Natural killer cell (primary cell): ENCODE measurements at regions of chr12 and their contacts with region 1.

Region 1: DNA sequence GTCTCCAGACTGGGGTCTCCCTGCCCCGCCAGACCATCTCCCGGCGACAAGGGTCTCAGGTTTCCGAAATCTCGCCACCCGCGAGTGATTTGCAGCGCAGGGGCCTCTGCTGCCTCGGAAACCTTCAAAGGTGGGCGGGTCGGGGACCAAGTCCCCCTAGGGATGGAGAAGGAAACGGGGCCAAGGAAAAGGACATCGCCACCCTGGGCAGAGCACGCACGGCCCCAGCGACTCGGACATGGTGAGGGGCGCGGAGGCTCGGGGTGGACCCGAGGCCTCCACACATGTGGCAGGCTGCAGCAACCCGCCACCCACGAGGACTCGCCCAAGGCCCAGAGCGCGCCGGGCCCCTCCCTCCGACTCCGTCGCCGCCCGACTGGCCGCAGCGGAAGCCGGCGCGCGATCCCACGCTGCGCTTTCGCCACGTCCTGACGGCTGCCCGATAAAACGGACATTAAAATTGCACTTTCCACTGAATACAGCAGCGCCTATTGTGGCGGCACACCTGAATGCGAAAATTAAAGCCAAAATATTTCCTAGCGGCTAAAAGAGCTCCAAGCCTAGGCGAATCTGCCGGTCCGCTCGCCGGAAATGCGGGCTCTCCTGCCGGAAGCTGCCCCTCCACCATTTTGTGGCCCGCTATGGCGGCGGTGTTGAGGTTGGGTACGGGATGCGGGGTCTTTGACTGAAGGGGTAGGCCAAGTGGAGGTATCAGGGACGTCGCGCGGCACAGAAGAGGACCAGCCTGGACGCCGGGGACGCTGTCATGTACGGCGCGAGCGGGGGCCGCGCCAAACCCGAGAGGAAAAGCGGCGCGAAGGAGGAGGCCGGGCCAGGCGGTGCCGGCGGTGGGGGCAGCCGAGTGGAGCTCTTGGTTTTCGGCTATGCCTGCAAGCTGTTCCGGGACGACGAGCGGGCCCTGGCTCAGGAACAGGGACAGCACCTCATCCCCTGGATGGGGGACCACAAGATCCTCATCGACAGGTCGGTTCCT is at the start of gene SFSWAP:
- DNase-seq: peak; percentile 78 to 82
- ATAC-seq: peak; percentile 90 to 92 (median 91)
- H3K4me3 ChIP-seq: peak within 1 kb of the TSS; percentile 95
- H3K4me3 Mint-ChIP-seq: peak within 1 kb of the TSS; percentile 97
- H3K27ac ChIP-seq: peak within 1 kb of the TSS; percentile 95
- H3K27ac Mint-ChIP-seq: peak within 1 kb of the TSS; percentile 93 to 97
- H3K4me1 ChIP-seq: peaks cover 21% of the 10 kb centered on the region
- H3K4me1 Mint-ChIP-seq: peaks cover 14 to 32% of the 10 kb centered on the region in 2 donors
- H3K27me3 ChIP-seq: no peaks in the 10 kb centered on the region
- H3K27me3 Mint-ChIP-seq: peaks cover 0 to 2% of the 10 kb centered on the region in 2 donors
- CTCF ChIP-seq: no peak
- total RNA-seq, gene SFSWAP: 99.1 to 109 (median 102) TPM

Region 2: GRCh38 chr12:131159660-131160059 is 551.1 kb before region 1 on chr12:
- intact Hi-C with region 1: no loop called
- DNase-seq: no peak
- ATAC-seq: no peak
- H3K4me3 ChIP-seq: no peak overlapping the region
- H3K4me3 Mint-ChIP-seq: no peak overlapping the region
- H3K27ac ChIP-seq: no peak overlapping the region
- H3K27ac Mint-ChIP-seq: no peak overlapping the region
- H3K4me1 ChIP-seq: no peaks in the 10 kb centered on the region
- H3K4me1 Mint-ChIP-seq: no peaks in the 10 kb centered on the region
- H3K27me3 ChIP-seq: no peaks in the 10 kb centered on the region
- H3K27me3 Mint-ChIP-seq: peaks cover 0 to 4% of the 10 kb centered on the region in 2 donors
- CTCF ChIP-seq: no peak

Region 3: DNA sequence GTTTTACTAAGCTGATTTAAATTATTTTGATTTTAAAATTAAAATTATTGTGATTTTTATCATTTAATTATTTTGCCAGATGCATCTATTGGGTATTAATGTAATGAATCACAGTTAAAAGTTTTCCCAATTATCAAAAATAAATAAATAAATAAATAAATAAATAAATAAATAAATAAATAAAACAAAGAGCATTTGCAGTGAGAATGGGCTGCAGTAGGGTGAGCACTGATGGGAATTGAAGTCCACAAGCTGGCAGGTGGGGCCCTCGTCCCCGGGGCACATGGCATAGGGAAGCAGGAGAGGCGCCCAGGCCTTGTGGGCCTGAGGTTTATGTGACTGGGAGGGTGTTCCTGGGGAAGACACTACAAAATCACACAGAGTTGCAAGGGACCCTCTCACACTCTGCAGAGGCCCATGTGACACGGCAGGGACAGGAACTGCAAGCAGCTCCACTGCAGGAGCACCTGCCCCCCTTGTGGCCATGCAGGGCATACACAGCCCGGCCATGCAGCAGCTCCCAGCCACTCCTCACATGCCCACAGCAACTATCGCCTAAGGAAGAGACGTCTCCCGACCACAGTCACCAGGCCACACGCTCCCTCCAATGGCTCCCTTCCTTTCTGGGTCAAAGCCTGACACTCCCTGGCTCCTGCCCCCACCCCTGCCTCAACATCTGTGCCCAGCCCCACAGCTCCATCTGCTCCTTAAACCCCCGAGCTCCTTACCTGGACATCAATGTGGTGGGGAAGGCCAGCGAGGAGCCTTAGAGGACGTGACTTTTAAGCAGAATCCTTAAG is 256.1 kb before region 1 on chr12:
- intact Hi-C with region 1: no loop called
- DNase-seq: peak; percentile 14 to 25
- ATAC-seq: peak in 2 of 3 donors; percentile 64 to 74
- H3K4me3 ChIP-seq: no peak overlapping the region
- H3K4me3 Mint-ChIP-seq: no peak overlapping the region
- H3K27ac ChIP-seq: no peak overlapping the region
- H3K27ac Mint-ChIP-seq: no peak overlapping the region
- H3K4me1 ChIP-seq: peaks cover 4% of the 10 kb centered on the region
- H3K4me1 Mint-ChIP-seq: peaks cover 0 to 6% of the 10 kb centered on the region in 2 donors
- H3K27me3 ChIP-seq: no peaks in the 10 kb centered on the region
- H3K27me3 Mint-ChIP-seq: peaks cover 8 to 10% of the 10 kb centered on the region in 2 donors
- CTCF ChIP-seq: peak; percentile 44

Region 4: GRCh38 chr12:131608740-131609690 is 101.7 kb before region 1 on chr12:
- intact Hi-C with region 1: loop called (anchors 10 kb)
- DNase-seq: peak; percentile 50 to 79
- ATAC-seq: peak; percentile 65 to 73 (median 66)
- H3K4me3 ChIP-seq: no peak overlapping the region
- H3K4me3 Mint-ChIP-seq: peak overlapping the region; percentile 66
- H3K27ac ChIP-seq: no peak overlapping the region
- H3K27ac Mint-ChIP-seq: no peak overlapping the region
- H3K4me1 ChIP-seq: peaks cover 48% of the 10 kb centered on the region
- H3K4me1 Mint-ChIP-seq: peaks cover 57% of the 10 kb centered on the region in 2 donors
- H3K27me3 ChIP-seq: no peaks in the 10 kb centered on the region
- H3K27me3 Mint-ChIP-seq: no peaks in the 10 kb centered on the region
- CTCF ChIP-seq: peak; percentile 69